CD8-positive, alpha-beta T cell (primary cell): ENCODE measurements at regions of chr10 and their contacts with region 1.

Region 1: DNA sequence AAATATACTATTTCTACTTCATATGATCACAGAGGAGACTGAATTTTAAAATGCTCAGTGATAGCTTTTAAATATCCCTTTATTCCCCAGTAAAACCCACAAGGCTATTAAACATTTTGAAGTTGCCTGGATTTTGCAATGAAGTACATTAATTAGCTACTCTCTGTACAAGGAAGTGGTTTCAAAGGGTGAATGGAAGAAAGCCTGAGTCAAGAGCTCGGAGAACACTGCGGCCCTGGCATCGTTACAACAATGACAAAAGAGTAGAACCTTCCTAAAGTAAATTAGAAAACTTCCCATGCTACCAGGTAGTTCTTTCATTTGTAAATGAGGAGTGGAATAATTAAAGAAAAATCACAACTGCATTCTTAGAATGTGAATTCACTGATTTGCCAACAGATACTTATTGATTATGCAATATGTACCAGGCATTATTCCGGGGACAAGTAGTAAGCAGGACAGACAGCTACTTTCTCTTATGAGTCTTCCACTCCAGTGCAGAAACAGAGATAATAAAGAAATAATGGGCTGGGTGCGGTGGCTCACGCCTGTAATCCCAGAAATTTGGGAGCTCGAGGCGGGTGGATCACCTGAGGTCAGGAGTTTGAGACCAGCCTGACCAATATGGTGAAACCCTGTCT is 63.0 kb downstream of the ZNF22 start:
- DNase-seq: no peak
- ATAC-seq: no peak
- H3K4me3 ChIP-seq: no peak overlapping the region
- H3K4me3 Mint-ChIP-seq: no peak overlapping the region
- H3K27ac ChIP-seq: no peak overlapping the region
- H3K27ac Mint-ChIP-seq: no peak overlapping the region
- H3K4me1 ChIP-seq: no peaks in the 10 kb centered on the region
- H3K4me1 Mint-ChIP-seq: no peaks in the 10 kb centered on the region
- H3K27me3 ChIP-seq: no peaks in the 10 kb centered on the region
- H3K27me3 Mint-ChIP-seq: peaks cover 4% of the 10 kb centered on the region
- CTCF ChIP-seq: no peak

Region 2: DNA sequence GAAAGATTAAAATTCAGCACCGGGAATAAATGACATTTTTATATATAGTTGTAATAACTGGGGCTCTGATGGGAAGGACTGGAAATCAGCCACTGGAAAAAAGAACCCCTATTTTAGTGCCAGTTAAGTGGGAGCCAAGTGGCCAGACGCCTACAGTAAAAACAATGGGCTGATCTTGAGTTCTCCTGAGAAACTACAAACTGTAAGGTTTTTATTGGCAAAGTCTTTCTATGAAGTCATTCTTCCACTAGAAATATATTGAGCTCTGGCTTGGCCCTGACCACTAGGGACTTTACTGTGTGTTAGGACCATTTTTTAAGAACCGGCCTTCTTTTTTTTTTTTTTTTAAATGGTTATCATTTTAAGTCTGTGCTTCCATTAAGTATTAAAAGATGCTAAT is 16.6 kb after region 1 on chr10:
- CTCF ChIA-PET with region 1: no interaction called
- POLR2A ChIA-PET with region 1: no interaction called
- intact Hi-C with region 1: no loop called
- DNase-seq: no peak
- ATAC-seq: no peak
- H3K4me3 ChIP-seq: no peak overlapping the region
- H3K4me3 Mint-ChIP-seq: no peak overlapping the region
- H3K27ac ChIP-seq: no peak overlapping the region
- H3K27ac Mint-ChIP-seq: no peak overlapping the region
- H3K4me1 ChIP-seq: peaks cover 4% of the 10 kb centered on the region
- H3K4me1 Mint-ChIP-seq: peaks cover 15% of the 10 kb centered on the region
- H3K27me3 ChIP-seq: no peaks in the 10 kb centered on the region
- H3K27me3 Mint-ChIP-seq: no peaks in the 10 kb centered on the region
- CTCF ChIP-seq: no peak

Region 3: GRCh38 chr10:45118929-45119328 is 55.2 kb after region 1 on chr10:
- CTCF ChIA-PET with region 1: no interaction called
- POLR2A ChIA-PET with region 1: no interaction called
- intact Hi-C with region 1: loop called in 1 of 2 experiments (anchors 2 kb)
- DNase-seq: no peak
- ATAC-seq: no peak
- H3K4me3 ChIP-seq: no peak overlapping the region
- H3K4me3 Mint-ChIP-seq: no peak overlapping the region
- H3K27ac ChIP-seq: no peak overlapping the region
- H3K27ac Mint-ChIP-seq: no peak overlapping the region
- H3K4me1 ChIP-seq: no peaks in the 10 kb centered on the region
- H3K4me1 Mint-ChIP-seq: no peaks in the 10 kb centered on the region
- H3K27me3 ChIP-seq: no peaks in the 10 kb centered on the region
- H3K27me3 Mint-ChIP-seq: peaks cover 7% of the 10 kb centered on the region
- CTCF ChIP-seq: no peak